Activated B cell treated with CpG ODN at 0.5 μM for 24 hours (primary cell): ENCODE measurements at regions of chr14 and their contacts with region 1.

Region 1: GRCh38 chr14:55303691-55304145 is 32.5 kb downstream of the FBXO34 start:
- DNase-seq: no peak
- ATAC-seq: peak; percentile 42
- H3K4me3 Mint-ChIP-seq: no peak overlapping the region
- H3K27ac Mint-ChIP-seq: peak overlapping the region; percentile 10
- H3K4me1 Mint-ChIP-seq: peaks cover 33% of the 10 kb centered on the region
- H3K27me3 Mint-ChIP-seq: no peaks in the 10 kb centered on the region
- CTCF ChIP-seq: no peak

Region 2: GRCh38 chr14:55228261-55228660 is 75.5 kb before region 1 on chr14:
- CTCF ChIA-PET with region 1: no interaction called
- POLR2A ChIA-PET with region 1: no interaction called
- intact Hi-C with region 1: no loop called
- DNase-seq: no peak
- ATAC-seq: no peak
- H3K4me3 Mint-ChIP-seq: no peak overlapping the region
- H3K27ac Mint-ChIP-seq: no peak overlapping the region
- H3K4me1 Mint-ChIP-seq: no peaks in the 10 kb centered on the region
- H3K27me3 Mint-ChIP-seq: peaks cover 15% of the 10 kb centered on the region
- CTCF ChIP-seq: no peak

Region 3: DNA sequence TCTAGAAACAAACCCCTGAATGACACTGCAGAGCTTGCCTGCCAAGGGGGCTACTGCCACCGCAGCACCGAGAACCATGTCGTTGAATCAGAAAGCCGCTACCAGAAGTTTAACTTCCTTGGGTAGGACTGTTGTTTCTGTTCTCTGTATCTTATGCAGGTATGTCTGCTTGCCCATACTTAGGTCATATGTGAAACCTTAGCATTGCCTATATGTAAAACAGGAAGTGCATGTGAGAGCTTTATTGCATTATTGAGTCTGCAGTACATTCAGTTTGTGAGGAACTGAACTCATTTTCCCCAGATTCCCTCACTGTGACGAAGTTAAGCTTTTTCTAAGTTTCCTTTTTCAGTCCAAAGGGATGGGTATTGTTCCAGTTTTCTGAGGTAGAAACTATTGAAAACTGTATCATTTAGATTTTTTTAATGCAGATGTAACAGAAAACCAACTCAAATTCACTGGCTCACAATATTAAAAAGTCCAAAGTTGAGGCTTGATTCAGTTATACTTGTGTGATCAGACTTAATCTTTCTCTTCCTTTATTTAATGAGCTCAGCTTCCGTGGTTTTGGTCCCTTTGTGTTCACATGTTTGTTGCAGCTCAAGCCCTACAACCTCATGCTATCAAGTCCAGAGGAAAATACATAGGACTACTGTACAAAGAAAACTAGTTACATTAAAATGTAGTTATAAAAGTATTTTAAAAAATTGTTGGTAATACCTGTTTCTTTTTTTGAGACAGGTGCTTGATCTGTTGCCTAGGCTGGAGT is 25.6 kb before region 1 on chr14:
- CTCF ChIA-PET with region 1: no interaction called
- POLR2A ChIA-PET with region 1: interaction called, 11 read pairs
- intact Hi-C with region 1: no loop called
- DNase-seq: no peak
- ATAC-seq: peak; percentile 86
- H3K4me3 Mint-ChIP-seq: peak overlapping the region; percentile 67
- H3K27ac Mint-ChIP-seq: peak overlapping the region; percentile 77
- H3K4me1 Mint-ChIP-seq: peaks cover 58% of the 10 kb centered on the region
- H3K27me3 Mint-ChIP-seq: no peaks in the 10 kb centered on the region
- CTCF ChIP-seq: no peak